ENCODE measurements at regions of chr9 and their contacts with region 1.

Region 1: DNA sequence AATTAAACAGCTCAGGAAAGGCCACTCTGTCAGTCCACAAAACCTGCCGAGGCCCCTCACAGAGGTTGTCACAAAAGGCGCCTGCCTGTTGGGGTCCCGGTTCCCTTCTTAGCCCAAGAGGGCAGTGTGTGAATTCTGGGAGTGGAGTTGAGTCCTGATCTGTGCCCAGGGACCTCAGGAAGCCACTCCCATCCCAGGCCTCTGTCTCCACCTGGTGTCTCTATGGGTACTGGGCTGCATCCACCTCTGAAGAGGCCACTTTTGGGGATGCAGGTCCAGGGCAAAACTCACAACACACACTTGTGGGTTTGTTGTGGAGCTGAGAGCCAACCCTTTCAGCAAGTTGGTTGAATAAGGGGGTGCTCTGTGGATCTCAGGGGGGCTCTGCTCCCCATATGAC is 74.3 kb upstream of the STXBP1 start:
- DNase-seq: no peak
- ATAC-seq: peak; percentile 49; the same call in 1 of the 2 replicates
- H3K4me3 ChIP-seq: no peak overlapping the region
- H3K27ac ChIP-seq: peak overlapping the region; percentile 73
- H3K4me1 ChIP-seq: peaks cover 71% of the 10 kb centered on the region
- H3K27me3 ChIP-seq: no peaks in the 10 kb centered on the region
- CTCF ChIP-seq: no peak

Region 2: DNA sequence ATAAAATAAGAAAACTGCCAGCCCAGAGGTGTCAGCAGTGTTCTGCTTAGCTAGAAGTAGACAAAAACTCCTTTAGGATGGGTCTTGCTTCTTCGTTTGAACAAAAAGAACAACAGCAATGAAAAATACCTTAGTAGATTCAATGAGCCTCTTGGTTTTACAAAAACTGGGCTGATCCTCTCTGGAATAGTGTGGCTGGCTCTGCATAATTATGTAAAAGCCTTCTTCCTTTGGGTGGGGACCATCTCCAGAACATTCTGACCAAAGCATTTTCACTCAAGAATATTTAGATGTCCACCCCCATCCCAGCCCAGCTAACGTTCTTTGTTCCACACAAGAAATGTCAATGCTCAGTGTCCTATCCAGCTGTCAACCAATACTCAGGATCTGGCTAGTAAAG is 23.3 kb before region 1 on chr9:
- CTCF ChIA-PET with region 1: no interaction called
- POLR2A ChIA-PET with region 1: no interaction called
- in situ Hi-C with region 1: no loop called
- intact Hi-C with region 1: no loop called
- DNase-seq: no peak
- ATAC-seq: no peak
- H3K4me3 ChIP-seq: no peak overlapping the region
- H3K27ac ChIP-seq: no peak overlapping the region
- H3K4me1 ChIP-seq: peaks cover 5% of the 10 kb centered on the region
- H3K27me3 ChIP-seq: no peaks in the 10 kb centered on the region
- CTCF ChIP-seq: no peak

Region 3: GRCh38 chr9:127525401-127526187 is 12.2 kb before region 1 on chr9:
- CTCF ChIA-PET with region 1: interaction called, 10 read pairs
- POLR2A ChIA-PET with region 1: no interaction called
- in situ Hi-C with region 1: no loop called
- intact Hi-C with region 1: no loop called
- DNase-seq: no peak
- ATAC-seq: no peak
- H3K4me3 ChIP-seq: no peak overlapping the region
- H3K27ac ChIP-seq: peak overlapping the region; percentile 64
- H3K4me1 ChIP-seq: peaks cover 38% of the 10 kb centered on the region
- H3K27me3 ChIP-seq: no peaks in the 10 kb centered on the region
- CTCF ChIP-seq: no peak; the same call in 1 of the 2 replicates